ENCODE measurements at regions of chr13 and their contacts with region 1.

Region 1: DNA sequence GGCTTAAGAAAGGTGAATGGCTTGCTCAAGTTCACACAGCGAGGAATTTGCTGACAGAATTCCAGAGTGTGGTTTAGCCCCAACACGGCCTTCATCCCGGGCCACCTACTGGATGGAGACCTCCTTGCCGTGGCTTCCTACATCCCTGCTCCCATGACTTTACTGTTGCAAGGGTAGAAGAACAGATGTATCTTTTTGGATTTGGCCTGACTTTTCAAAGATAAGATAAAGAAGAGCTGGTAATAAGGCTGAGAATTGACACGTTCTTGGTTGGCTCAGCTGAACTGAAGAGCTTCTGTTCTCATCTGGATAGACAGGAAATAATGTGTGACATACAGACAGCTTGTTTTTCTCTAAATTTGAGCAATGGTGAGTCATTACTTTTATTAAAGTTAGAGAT is 113.1 kb downstream of the KLF5 start:
- DNase-seq: peak; percentile 59
- ATAC-seq: peak; percentile 73
- H3K4me3 ChIP-seq: peak overlapping the region; percentile 47
- H3K27ac ChIP-seq: peak overlapping the region; percentile 100
- H3K4me1 ChIP-seq: peaks cover 62% of the 10 kb centered on the region
- H3K27me3 ChIP-seq: no peaks in the 10 kb centered on the region
- CTCF ChIP-seq: no peak

Region 2: DNA sequence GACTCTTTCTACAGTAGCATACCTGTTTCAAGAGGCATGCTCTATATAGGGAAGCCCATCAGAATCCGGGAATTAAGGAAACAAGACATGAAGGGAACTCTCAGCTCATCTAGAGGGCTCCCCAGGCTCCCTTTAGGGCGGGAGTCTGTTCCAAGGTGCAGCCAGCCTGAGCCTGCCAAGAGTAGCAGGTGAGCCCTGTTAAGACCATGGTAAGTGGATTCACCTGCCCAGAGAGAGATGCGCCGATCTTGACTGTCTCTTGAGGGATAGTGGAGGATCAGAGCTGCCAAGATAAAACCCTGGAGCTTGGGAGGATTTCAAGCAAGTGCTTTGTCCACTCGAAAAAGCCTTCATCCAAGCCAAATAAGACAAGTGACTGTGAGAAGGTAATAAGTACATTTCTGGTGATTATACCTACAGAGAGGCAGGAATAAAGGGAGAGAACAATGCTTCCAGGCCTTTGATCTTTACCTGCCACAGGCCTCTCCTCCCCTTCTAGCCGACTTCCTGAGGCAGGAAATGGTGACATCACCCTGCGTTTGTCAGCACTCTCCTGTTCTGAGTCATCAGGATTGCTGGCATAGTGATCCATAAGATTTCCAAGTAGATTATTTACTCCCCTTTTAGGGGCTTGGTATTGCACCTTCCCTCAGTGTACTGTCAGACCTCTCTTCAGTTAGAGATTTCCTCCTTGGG is 81.7 kb before region 1 on chr13:
- CTCF ChIA-PET with region 1: no interaction called
- POLR2A ChIA-PET with region 1: interaction called, 12 read pairs
- intact Hi-C with region 1: no loop called
- DNase-seq: peak; percentile 95
- ATAC-seq: peak; percentile 98
- H3K4me3 ChIP-seq: no peak overlapping the region
- H3K27ac ChIP-seq: peak overlapping the region; percentile 98
- H3K4me1 ChIP-seq: peaks cover 13% of the 10 kb centered on the region
- H3K27me3 ChIP-seq: no peaks in the 10 kb centered on the region
- CTCF ChIP-seq: no peak

Region 3: GRCh38 chr13:73268306-73268705 is 96.4 kb after region 1 on chr13:
- CTCF ChIA-PET with region 1: no interaction called
- POLR2A ChIA-PET with region 1: no interaction called
- intact Hi-C with region 1: loop called (anchors 1 kb)
- DNase-seq: peak; percentile 96
- ATAC-seq: peak; percentile 88
- H3K4me3 ChIP-seq: no peak overlapping the region
- H3K27ac ChIP-seq: peak overlapping the region; percentile 75
- H3K4me1 ChIP-seq: peaks cover 19% of the 10 kb centered on the region
- H3K27me3 ChIP-seq: no peaks in the 10 kb centered on the region
- CTCF ChIP-seq: no peak

Region 4: GRCh38 chr13:73428137-73428536 is 256.2 kb after region 1 on chr13:
- CTCF ChIA-PET with region 1: no interaction called
- POLR2A ChIA-PET with region 1: no interaction called
- intact Hi-C with region 1: loop called (anchors 10 kb)
- DNase-seq: peak; percentile 84
- ATAC-seq: peak; percentile 71
- H3K4me3 ChIP-seq: no peak overlapping the region; the same call in 1 of the 2 replicates
- H3K27ac ChIP-seq: peak overlapping the region; percentile 99
- H3K4me1 ChIP-seq: peaks cover 37% of the 10 kb centered on the region
- H3K27me3 ChIP-seq: no peaks in the 10 kb centered on the region
- CTCF ChIP-seq: no peak